ENCODE measurements at regions of chr11 and their contacts with region 1.

Region 1: DNA sequence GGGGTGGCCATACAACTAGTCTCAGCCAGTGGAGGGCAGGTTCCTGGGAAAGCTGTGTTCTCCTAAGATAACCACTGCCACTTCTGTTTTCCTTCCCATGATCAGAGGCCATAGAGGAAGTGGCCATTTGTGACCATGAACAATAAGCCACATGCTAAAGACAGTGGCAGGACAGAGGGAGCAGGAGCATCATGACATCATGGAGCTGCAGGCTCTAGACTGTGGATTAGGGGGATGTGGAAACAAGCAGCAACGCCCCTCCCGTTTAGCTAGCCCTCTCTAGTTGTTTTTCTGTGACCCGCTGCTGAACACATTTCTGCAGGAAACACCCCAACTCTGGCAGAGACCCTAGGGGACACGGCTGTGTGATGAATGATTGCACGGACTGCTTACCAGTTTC is 195.0 kb upstream of the NECTIN1 start:
- DNase-seq: no peak
- CTCF ChIP-seq: no peak

Region 2: GRCh38 chr11:119806064-119806915 is 117.7 kb before region 1 on chr11:
- CTCF ChIA-PET with region 1: no interaction called
- POLR2A ChIA-PET with region 1: no interaction called
- DNase-seq: no peak
- CTCF ChIP-seq: no peak

Region 3: GRCh38 chr11:119912229-119912628 is 11.8 kb before region 1 on chr11:
- CTCF ChIA-PET with region 1: interaction called, 10 read pairs
- POLR2A ChIA-PET with region 1: no interaction called
- DNase-seq: no peak
- CTCF ChIP-seq: no peak

Region 4: DNA sequence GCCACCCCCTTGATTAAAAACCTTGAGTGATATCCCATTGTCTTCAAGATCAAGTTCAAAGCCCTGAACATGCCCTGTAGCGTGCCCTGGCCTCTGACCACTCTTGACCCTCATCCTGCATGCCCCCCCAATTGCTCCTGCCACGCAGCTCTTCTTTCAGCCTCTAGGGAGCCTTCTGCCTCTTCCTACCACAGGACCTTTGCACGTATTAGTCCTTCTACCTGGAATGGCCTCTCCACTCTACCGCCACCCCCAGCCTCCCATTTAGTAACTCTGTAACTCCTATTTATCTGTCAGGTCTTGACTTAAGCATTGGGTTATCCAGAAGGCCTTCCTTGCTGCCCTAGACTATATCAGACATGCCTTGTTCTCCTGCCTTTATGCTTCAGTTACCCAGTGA is 10.2 kb after region 1 on chr11:
- CTCF ChIA-PET with region 1: no interaction called
- POLR2A ChIA-PET with region 1: no interaction called
- DNase-seq: no peak
- CTCF ChIP-seq: no peak

Measured in GM10248 (cell line).